T-cell (primary cell): ENCODE measurements at regions of chr15 and their contacts with region 1.

Region 1: GRCh38 chr15:85543741-85544155 is 163.3 kb downstream of the AKAP13 start:
- DNase-seq: peak; percentile 2 to 73 (median 53)
- ATAC-seq: peak; percentile 72 to 93 (median 76)
- H3K4me3 ChIP-seq: peak overlapping the region; percentile 0 to 39
- H3K4me3 Mint-ChIP-seq: peak overlapping the region; percentile 2 to 69 (median 43)
- H3K27ac ChIP-seq: no peak overlapping the region
- H3K27ac Mint-ChIP-seq: peak overlapping the region; percentile 6 to 53
- H3K4me1 ChIP-seq: peaks cover 5 to 20% of the 10 kb centered on the region in 2 experiments
- H3K4me1 Mint-ChIP-seq: peaks cover 71 to 85% (median 81%) of the 10 kb centered on the region in 3 donors
- H3K27me3 ChIP-seq: no peaks in the 10 kb centered on the region
- H3K27me3 Mint-ChIP-seq: no peaks in the 10 kb centered on the region

Region 2: DNA sequence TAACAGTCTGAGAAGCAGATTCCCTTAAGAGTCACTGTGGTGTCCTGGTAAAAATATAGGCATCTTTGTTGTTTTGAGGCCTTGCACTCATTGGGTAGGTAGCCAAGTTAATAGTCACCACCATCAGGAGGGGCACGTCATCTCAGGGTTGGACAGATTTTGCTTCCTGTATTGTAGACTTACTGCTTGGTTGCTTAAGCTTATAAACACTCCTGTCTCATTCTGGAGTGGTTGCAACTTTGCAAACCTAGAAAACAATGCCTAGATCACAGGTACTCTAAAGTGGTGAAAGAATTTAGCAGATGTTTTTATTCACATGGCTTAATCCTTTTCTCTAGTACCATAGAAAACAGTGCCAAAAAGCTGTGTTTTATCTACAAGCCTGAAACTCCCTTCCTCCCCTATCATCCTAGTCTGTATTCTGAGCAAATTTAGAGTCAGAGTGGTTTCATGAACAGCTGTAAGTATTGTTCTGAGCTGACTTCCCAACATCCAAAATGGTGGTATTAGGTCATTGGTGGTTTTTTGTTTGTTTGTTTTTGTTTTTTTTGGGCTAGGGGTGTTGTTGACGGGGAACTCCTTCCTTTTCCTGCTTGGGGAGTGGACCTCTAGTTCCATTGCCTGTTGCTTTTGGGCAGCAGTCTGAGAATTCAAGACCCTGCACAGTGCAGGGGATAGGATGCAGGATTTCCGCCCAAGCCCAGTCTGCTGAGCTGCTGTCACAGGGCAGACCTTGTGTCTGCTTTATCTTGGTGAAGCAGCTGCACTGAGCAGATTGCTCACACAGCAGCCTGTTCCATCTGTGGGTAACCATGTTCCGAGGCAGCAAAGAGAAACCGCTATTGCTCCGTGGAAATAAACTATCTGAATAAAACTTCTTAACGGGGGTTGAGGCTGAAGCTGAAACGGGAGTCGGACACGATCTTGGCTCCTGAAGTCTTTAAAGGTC is 38.7 kb after region 1 on chr15:
- CTCF ChIA-PET with region 1: interaction called in 1 of 2 experiments, 5 read pairs
- POLR2A ChIA-PET with region 1: interaction called, 3 to 12 read pairs
- DNase-seq: peak; percentile 32 to 79 (median 64)
- ATAC-seq: peak; percentile 87 to 92 (median 90)
- H3K4me3 ChIP-seq: peak overlapping the region; percentile 55 to 58
- H3K4me3 Mint-ChIP-seq: peak overlapping the region; percentile 82 to 88 (median 82)
- H3K27ac ChIP-seq: peak overlapping the region; percentile 93
- H3K27ac Mint-ChIP-seq: peak overlapping the region; percentile 96 to 99
- H3K4me1 ChIP-seq: peaks cover 39 to 45% of the 10 kb centered on the region in 2 experiments
- H3K4me1 Mint-ChIP-seq: peaks cover 76 to 82% (median 77%) of the 10 kb centered on the region in 3 donors
- H3K27me3 ChIP-seq: no peaks in the 10 kb centered on the region
- H3K27me3 Mint-ChIP-seq: no peaks in the 10 kb centered on the region